Pancreas (tissue), 10 donors: ENCODE measurements at regions of chr6 and their contacts with region 1.

Region 1: GRCh38 chr6:153947808-153948447 is 91.1 kb upstream of the OPRM1 start:
- DNase-seq: peak in 2 of 6 donors; percentile 4 to 40
- ATAC-seq: peak; percentile 43 to 86 (median 78)
- H3K4me3 ChIP-seq: no peak overlapping the region
- H3K27ac ChIP-seq: no peak overlapping the region
- H3K4me1 ChIP-seq: no peaks in the 10 kb centered on the region
- H3K27me3 ChIP-seq: no peaks in the 10 kb centered on the region
- CTCF ChIP-seq: peak; percentile 79 to 90 (median 83)

Region 2: DNA sequence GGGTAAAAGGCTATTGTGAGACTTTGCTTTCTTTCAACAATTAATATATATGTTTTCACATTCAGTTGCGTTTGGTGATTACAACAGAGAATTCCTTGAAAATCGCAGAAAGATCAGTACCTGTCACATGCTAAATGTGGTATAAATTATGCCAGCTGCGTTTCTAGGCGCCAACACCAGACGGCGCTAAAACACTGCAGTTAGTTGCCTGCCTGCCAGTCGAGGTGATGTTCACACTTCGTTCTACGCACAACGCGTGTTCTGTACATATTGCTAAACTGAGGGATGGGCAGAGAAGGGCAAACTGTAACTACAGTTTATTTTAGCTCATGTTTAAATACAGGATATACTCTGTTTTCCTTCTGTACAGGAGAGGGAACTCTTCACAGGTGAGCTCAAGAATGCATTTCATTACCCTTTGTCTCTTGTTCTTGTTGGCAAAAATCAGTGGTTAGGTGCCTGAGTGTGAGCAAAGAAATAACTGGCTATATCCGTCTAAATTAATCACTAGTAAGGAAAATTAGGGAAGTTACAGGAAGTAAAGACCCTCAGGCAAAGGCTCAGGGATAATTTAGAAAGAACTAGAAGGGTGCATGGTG is 716.8 kb before region 1 on chr6:
- intact Hi-C with region 1: loop called in 1 of 3 experiments (anchors 10 kb)
- DNase-seq: peak in 5 of 6 donors; percentile 27 to 82 (median 56)
- ATAC-seq: peak; percentile 74 to 87 (median 86)
- H3K4me3 ChIP-seq: no peak overlapping the region
- H3K27ac ChIP-seq: no peak overlapping the region
- H3K4me1 ChIP-seq: no peaks in the 10 kb centered on the region
- H3K27me3 ChIP-seq: no peaks in the 10 kb centered on the region
- CTCF ChIP-seq: peak; percentile 69 to 78 (median 72)

Region 3: GRCh38 chr6:153831350-153832078 is 116.4 kb before region 1 on chr6:
- intact Hi-C with region 1: no loop called
- DNase-seq: no peak
- ATAC-seq: no peak
- H3K4me3 ChIP-seq: no peak overlapping the region
- H3K27ac ChIP-seq: no peak overlapping the region
- H3K4me1 ChIP-seq: no peaks in the 10 kb centered on the region
- H3K27me3 ChIP-seq: no peaks in the 10 kb centered on the region
- CTCF ChIP-seq: no peak

Region 4: DNA sequence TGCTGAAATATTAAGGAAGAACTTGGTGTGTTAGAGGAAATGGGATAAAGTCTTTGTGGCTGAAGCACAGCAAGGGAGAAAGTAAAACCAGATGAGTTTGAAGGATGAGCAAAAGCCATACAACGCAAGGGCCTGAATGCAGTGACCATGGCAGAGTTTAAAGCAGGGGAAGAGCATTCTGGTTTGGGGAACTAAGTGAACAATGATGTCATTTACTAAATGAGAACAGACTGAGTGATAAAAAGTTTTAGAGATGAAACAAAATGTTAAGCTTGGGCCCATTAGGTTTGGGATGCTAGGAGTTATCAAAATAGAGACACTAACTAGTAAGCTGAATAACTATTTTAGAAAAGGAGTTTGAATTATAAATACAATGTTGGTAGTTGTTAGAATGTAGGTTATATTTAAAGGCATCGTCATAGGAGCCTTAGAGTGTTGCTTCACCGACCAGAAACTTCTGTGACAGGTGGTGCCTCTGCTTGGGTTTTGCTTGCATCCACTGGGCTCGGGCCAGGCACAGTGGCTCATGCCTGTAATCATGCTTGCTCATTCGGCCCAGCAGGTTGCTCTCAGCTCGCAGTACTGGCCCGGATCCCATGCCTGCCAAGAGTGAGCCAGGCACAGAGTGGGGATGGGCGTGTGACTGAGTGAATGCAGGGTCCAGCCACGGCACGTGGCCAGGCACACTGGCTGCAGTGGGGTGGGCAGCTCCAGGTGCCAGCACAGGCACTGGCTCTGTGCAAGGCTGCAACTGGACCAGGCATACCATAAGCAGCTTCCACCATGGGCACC is 53.8 kb after region 1 on chr6:
- intact Hi-C with region 1: no loop called
- DNase-seq: peak in 1 of 6 donors; percentile 39
- ATAC-seq: no peak
- H3K4me3 ChIP-seq: no peak overlapping the region
- H3K27ac ChIP-seq: no peak overlapping the region
- H3K4me1 ChIP-seq: no peaks in the 10 kb centered on the region
- H3K27me3 ChIP-seq: no peaks in the 10 kb centered on the region
- CTCF ChIP-seq: no peak